H1 (cell line): ENCODE measurements at regions of chr20 and their contacts with region 1.

Region 1: GRCh38 chr20:36613974-36614373 is 8.4 kb downstream of the RAB5IF start:
- DNase-seq: no peak
- H3K4me3 ChIP-seq: no peak overlapping the region
- H3K27ac ChIP-seq: no peak overlapping the region
- H3K4me1 ChIP-seq: no peaks in the 10 kb centered on the region
- H3K27me3 ChIP-seq: no peaks in the 10 kb centered on the region
- CTCF ChIP-seq: no peak
- EP300 ChIP-seq: no peak
- POLR2A ChIP-seq: no peak
- RAD21 ChIP-seq: no peak

Region 2: GRCh38 chr20:36624068-36624943 is 10.3 kb after region 1 on chr20:
- CTCF ChIA-PET with region 1: interaction called, 92 read pairs
- POLR2A ChIA-PET with region 1: interaction called, 5 read pairs
- DNase-seq: no peak
- H3K4me3 ChIP-seq: no peak overlapping the region
- H3K27ac ChIP-seq: no peak overlapping the region
- H3K4me1 ChIP-seq: peaks cover 0 to 4% (median 1%) of the 10 kb centered on the region in 4 experiments; a peak in 3 of 7 replicates
- H3K27me3 ChIP-seq: no peaks in the 10 kb centered on the region
- CTCF ChIP-seq: no peak
- EP300 ChIP-seq: no peak
- POLR2A ChIP-seq: no peak
- RAD21 ChIP-seq: 0 out of 4 replicates have a peak, but pooled peaks of 1 of the 2 experiments have one; percentile 12

Region 3: DNA sequence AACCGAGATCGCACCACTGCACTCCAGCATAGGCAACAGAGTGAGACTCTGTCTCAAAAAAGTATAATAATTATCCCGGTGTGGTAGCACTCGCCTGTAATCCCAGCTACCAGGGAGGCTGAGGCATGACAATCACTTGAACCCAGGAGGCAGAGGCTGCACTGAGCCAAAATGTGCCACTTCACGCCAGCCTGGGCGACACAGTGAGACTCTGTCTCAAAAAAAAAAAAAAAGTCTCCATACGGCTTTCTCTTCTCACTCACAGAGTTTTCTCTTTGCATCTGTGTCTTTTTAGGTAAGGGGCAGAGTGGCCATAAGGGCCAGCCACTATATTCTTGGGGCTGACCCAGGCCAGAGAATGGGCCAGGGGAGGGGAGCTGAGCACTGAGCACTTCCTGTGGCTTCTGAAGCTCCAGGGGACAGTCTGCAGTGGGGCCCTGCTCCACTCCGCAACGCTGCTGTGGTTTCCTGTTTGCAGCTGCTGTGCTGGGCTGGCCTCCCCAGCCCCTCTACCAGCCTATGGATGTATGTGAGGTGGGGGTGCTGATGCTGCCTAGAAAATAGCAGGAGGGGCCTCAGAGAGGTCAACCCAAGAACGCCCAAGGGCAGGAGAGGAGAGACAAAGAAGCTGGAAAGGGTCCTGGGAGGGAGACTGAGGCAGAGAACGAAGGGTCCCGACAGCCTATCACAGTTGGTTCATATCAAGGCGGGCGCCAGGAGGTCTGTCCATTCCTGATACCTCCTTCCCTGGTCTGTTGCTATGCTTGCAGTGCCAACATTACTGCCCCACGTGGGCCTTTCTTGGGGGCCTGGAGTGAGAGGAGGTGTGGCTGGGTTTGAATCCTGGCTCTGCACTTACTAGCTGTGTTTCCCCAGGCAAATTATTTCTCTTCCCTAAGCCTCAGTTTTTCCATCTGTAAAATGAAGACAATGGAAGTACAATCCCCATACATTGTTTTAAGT is 16.0 kb after region 1 on chr20:
- CTCF ChIA-PET with region 1: interaction called, 92 read pairs
- POLR2A ChIA-PET with region 1: interaction called, 5 read pairs
- DNase-seq: no peak
- H3K4me3 ChIP-seq: no peak overlapping the region
- H3K27ac ChIP-seq: no peak overlapping the region
- H3K4me1 ChIP-seq: no peaks in the 10 kb centered on the region; a peak in 2 of 7 replicates
- H3K27me3 ChIP-seq: no peaks in the 10 kb centered on the region
- CTCF ChIP-seq: no peak
- EP300 ChIP-seq: no peak
- POLR2A ChIP-seq: no peak
- RAD21 ChIP-seq: no peak

Region 4: GRCh38 chr20:36728986-36729385 is 115.0 kb after region 1 on chr20:
- CTCF ChIA-PET with region 1: interaction called, 10 read pairs
- POLR2A ChIA-PET with region 1: interaction called, 3 read pairs
- DNase-seq: no peak
- H3K4me3 ChIP-seq: no peak overlapping the region
- H3K27ac ChIP-seq: no peak overlapping the region
- H3K4me1 ChIP-seq: peaks cover 0 to 3% (median 0%) of the 10 kb centered on the region in 4 experiments; a peak in 2 of 7 replicates
- H3K27me3 ChIP-seq: no peaks in the 10 kb centered on the region
- CTCF ChIP-seq: peak in 2 of 3 experiments; percentile 59 to 64; a peak in 3 of 4 replicates
- EP300 ChIP-seq: no peak
- POLR2A ChIP-seq: no peak
- RAD21 ChIP-seq: peak; percentile 77 to 83